ENCODE measurements at regions of chr6 and their contacts with region 1.

Region 1: DNA sequence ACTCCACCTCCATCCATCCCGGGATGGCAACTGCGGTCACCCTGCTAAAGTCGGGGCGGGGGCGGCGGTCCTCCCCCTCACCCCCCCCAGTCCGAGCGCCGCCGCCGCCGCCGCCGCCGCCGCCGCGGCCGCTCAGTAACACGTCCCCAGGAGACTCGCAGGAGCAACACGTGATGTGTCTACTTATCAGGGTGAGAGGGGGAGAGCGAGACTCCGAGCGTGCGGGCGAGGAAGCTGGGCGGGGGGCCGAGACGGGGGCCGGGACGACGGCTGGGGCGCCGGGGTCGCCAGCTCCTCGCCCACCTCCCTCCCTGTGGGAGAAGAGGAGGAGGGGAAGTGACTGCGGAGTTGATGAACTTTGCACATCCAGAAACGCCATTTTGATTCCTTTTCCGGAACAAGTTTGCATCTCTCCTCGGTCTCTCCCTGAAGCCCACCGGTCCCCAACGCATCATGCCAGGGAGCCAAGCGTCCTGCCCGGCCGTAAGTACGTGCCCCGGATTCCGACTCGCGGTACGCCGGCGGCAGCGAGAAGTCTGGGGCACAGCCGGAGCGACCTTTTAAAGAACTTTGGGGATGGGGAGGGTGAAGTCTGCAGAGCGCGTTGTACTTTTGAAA is at the start of gene RREB1:
- DNase-seq: peak; percentile 77
- ATAC-seq: peak; percentile 54
- H3K4me3 Mint-ChIP-seq: peak within 1 kb of the TSS; percentile 94
- H3K27ac Mint-ChIP-seq: peak within 1 kb of the TSS; percentile 93
- H3K4me1 Mint-ChIP-seq: peaks cover 40% of the 10 kb centered on the region
- H3K27me3 Mint-ChIP-seq: no peaks in the 10 kb centered on the region
- total RNA-seq, gene RREB1: 14.7 to 18.1 TPM

Region 2: DNA sequence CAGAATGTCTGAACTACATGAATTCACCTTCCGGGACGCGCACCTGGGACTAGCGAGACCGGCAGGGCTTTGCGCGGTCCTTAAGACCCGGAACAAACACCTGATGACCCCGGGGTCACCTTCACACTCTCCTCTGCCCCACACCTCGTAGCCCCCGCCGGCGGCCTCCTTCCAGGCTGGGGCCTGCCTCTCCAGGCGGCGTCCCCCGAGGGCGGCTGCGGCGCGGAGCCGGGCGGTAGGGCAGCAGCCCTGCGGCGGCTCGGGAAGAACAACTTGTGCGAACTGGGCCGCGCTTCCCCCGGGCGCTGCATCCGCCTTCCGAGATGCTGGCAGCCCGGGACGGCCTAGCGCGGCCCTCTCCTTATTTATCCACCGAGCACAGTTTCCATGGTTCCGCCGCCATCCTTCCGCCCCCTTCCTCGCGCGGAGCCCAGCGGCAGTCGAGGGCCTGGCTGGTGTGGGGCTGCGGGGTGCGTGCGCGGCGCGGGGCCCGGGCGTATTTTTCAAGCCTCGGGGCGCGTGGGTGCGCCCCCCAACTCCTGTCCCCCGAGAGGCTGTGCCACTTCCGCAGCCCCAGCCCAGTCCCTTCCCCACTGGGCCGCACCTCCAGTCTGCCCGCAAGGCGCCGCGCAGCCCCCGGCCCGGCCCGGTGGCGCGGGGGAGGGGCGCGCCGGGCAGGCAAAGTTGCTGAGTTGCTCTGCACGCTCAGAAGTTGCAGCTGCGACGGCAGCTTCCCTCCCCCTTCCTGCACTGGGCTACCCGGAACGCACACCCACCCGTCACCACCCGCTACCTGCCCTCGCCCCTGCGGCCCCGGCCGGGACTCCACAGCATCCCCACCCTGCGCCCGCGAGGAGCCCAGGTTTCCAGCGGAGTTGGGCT is 56.2 kb before region 1 on chr6:
- CTCF ChIA-PET with region 1: no interaction called
- POLR2A ChIA-PET with region 1: interaction called, 3 read pairs
- intact Hi-C with region 1: loop called (anchors 2 to 5 kb)
- DNase-seq: peak; percentile 60
- ATAC-seq: peak; percentile 65
- H3K4me3 Mint-ChIP-seq: no peak overlapping the region
- H3K27ac Mint-ChIP-seq: no peak overlapping the region
- H3K4me1 Mint-ChIP-seq: peaks cover 6% of the 10 kb centered on the region
- H3K27me3 Mint-ChIP-seq: peaks cover 16% of the 10 kb centered on the region

Region 3: GRCh38 chr6:7086488-7086887 is 21.2 kb before region 1 on chr6:
- CTCF ChIA-PET with region 1: interaction called, 5 read pairs
- POLR2A ChIA-PET with region 1: interaction called, 14 read pairs
- intact Hi-C with region 1: loop called (anchors 1 to 2 kb)
- DNase-seq: peak; percentile 56
- ATAC-seq: peak; percentile 59
- H3K4me3 Mint-ChIP-seq: peak overlapping the region; percentile 53
- H3K27ac Mint-ChIP-seq: peak overlapping the region; percentile 26
- H3K4me1 Mint-ChIP-seq: peaks cover 30% of the 10 kb centered on the region
- H3K27me3 Mint-ChIP-seq: peaks cover 6% of the 10 kb centered on the region

Region 4: GRCh38 chr6:7154341-7155139 is 46.9 kb after region 1 on chr6:
- CTCF ChIA-PET with region 1: interaction called, 5 read pairs
- POLR2A ChIA-PET with region 1: no interaction called
- intact Hi-C with region 1: loop called in 1 of 2 experiments (anchors 1 kb)
- DNase-seq: peak; percentile 41
- ATAC-seq: peak; percentile 78
- H3K4me3 Mint-ChIP-seq: no peak overlapping the region
- H3K27ac Mint-ChIP-seq: peak overlapping the region; percentile 59
- H3K4me1 Mint-ChIP-seq: peaks cover 83% of the 10 kb centered on the region
- H3K27me3 Mint-ChIP-seq: no peaks in the 10 kb centered on the region

Region 5: DNA sequence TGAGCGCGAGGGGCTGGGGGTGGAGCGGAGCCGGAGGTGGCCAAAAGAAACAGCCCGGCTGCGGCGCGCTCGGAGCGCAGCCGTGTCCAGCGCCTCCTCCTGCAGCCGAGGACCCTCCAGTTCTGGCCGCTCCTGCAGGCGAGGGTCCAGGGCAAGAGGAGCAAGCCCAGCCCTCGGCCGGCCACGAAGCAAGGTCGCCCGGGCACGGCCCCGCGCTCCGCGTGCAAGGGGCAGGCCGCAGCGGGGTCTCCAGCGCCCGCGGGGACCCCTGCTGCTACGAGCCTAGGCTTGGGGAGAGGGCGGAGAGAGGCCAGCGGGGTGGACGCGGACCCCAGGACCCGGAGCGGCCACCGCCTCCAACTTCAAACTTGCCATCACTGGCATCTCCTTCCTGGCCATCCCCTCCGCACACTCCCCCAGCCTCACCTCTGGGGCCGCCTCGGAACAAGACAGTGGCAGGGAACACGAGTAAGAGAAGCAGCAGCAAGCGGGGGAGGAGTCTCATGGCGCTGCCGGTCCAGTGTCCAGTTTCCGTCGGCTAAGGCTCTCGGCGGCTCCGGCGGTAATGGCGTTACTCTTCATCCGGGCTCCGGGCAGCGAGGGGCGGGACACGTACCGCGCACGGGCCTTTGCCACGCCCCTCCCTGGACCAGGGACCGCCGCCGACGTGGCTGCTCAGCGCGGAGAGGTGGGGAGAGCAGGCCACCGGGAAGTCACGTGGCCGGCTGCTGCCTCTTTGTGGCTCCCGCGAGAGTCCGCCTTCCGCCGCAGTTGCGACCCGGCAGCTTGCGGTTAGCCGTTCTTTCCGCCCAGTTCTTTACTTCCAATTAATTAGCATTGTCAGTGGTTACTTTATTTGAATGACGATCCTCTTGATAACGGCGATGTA is 205.2 kb after region 1 on chr6 and contains the start of gene SSR1:
- CTCF ChIA-PET with region 1: no interaction called
- POLR2A ChIA-PET with region 1: no interaction called
- intact Hi-C with region 1: loop called in 1 of 2 experiments (anchors 1 kb)
- DNase-seq: peak; percentile 97
- ATAC-seq: peak; percentile 97
- H3K4me3 Mint-ChIP-seq: peak within 1 kb of the TSS; percentile 99
- H3K27ac Mint-ChIP-seq: peak within 1 kb of the TSS; percentile 98
- H3K4me1 Mint-ChIP-seq: peaks cover 45% of the 10 kb centered on the region
- H3K27me3 Mint-ChIP-seq: no peaks in the 10 kb centered on the region
- total RNA-seq, gene SSR1: 129 to 165 TPM

Measured in activated CD4-positive, alpha-beta T cell treated with anti-CD3 and anti-CD28 coated beads for 36 hours (primary cell).